Activated naive CD4-positive, alpha-beta T cell treated with anti-CD3 and anti-CD28 coated beads for 36 hours (primary cell): ENCODE measurements at regions of chr2 and their contacts with region 1.

Region 1: GRCh38 chr2:196076778-196077568 is 8.3 kb upstream of the DNAH7 start:
- DNase-seq: no peak
- H3K4me3 Mint-ChIP-seq: no peak overlapping the region
- H3K27ac Mint-ChIP-seq: no peak overlapping the region
- H3K4me1 Mint-ChIP-seq: peaks cover 25% of the 10 kb centered on the region
- H3K27me3 Mint-ChIP-seq: no peaks in the 10 kb centered on the region

Region 2: DNA sequence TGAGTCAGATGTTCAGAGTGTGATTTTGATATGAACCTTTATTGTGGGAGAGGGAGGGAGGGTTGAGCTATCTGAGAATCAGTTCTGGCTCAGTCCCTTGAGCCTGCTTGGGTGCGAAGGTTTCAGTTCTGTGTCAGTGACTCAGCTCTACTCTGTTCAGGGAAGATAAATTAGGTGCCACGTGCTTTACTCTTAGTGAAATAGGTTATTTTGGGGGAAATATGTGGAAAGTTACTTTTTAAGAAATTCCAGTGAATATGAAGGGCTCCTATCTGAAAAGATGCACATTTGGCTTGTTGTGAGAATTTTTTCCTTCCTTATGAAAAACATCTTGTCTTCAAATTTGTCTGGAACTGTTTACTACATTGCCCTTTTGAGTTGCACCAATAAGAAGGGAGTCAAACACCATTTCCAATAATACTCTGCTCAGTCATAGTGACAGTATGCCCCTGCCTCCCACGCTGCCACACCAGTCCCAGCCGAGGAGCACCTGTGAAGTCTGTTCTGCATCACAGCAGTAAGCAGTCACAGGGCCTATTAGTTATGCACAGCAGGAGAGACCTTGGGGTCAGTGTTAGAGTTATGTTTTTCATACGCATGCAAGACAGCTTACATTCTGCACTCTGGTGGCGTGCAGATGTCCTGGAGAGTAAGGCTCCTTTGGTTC is 24.5 kb after region 1 on chr2:
- CTCF ChIA-PET with region 1: interaction called, 14 read pairs
- intact Hi-C with region 1: loop called (anchors 2 kb)
- DNase-seq: peak; percentile 71
- H3K4me3 Mint-ChIP-seq: no peak overlapping the region
- H3K27ac Mint-ChIP-seq: peak overlapping the region; percentile 44
- H3K4me1 Mint-ChIP-seq: peaks cover 44% of the 10 kb centered on the region
- H3K27me3 Mint-ChIP-seq: no peaks in the 10 kb centered on the region

Region 3: GRCh38 chr2:196149948-196150347 is 73.0 kb after region 1 on chr2:
- CTCF ChIA-PET with region 1: interaction called, 4 read pairs
- intact Hi-C with region 1: loop called (anchors 5 kb)
- DNase-seq: no peak
- H3K4me3 Mint-ChIP-seq: peak overlapping the region; percentile 36
- H3K27ac Mint-ChIP-seq: peak overlapping the region; percentile 91
- H3K4me1 Mint-ChIP-seq: peaks cover 89% of the 10 kb centered on the region
- H3K27me3 Mint-ChIP-seq: no peaks in the 10 kb centered on the region

Region 4: DNA sequence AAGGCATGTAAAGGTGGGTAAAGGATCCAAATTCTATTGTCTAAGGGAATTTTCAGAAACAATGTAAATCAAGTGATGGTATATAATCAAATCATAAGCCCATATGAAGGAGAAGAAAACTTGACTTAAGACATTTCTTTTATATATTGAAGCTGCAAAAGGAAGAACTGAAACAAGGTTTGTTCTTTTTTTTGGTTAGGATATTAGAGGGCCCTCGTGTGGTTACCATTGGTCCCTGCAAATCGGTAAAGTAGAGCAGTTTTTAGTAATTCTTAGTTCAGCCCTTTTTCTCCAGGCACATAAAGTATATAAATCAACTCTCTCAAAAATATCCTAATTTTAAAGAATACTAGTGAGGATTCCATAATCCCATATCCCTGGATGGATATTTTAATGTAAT is 200.0 kb after region 1 on chr2:
- CTCF ChIA-PET with region 1: interaction called, 45 read pairs
- intact Hi-C with region 1: loop called (anchors 1 kb)
- DNase-seq: peak; percentile 57
- H3K4me3 Mint-ChIP-seq: no peak overlapping the region
- H3K27ac Mint-ChIP-seq: no peak overlapping the region
- H3K4me1 Mint-ChIP-seq: peaks cover 59% of the 10 kb centered on the region
- H3K27me3 Mint-ChIP-seq: no peaks in the 10 kb centered on the region

Region 5: GRCh38 chr2:196314780-196315179 is 237.8 kb after region 1 on chr2:
- CTCF ChIA-PET with region 1: interaction called, 10 read pairs
- intact Hi-C with region 1: no loop called
- DNase-seq: no peak
- H3K4me3 Mint-ChIP-seq: no peak overlapping the region
- H3K27ac Mint-ChIP-seq: no peak overlapping the region
- H3K4me1 Mint-ChIP-seq: peaks cover 2% of the 10 kb centered on the region
- H3K27me3 Mint-ChIP-seq: no peaks in the 10 kb centered on the region

Region 6: GRCh38 chr2:196453613-196454047 is 376.7 kb after region 1 on chr2:
- CTCF ChIA-PET with region 1: interaction called, 43 read pairs
- intact Hi-C with region 1: loop called (anchors 1 kb)
- DNase-seq: peak; percentile 63
- H3K4me3 Mint-ChIP-seq: no peak overlapping the region
- H3K27ac Mint-ChIP-seq: no peak overlapping the region
- H3K4me1 Mint-ChIP-seq: peaks cover 2% of the 10 kb centered on the region
- H3K27me3 Mint-ChIP-seq: peaks cover 16% of the 10 kb centered on the region